HCT116 (cell line): ENCODE measurements at regions of chr18 and their contacts with region 1.

Region 1: DNA sequence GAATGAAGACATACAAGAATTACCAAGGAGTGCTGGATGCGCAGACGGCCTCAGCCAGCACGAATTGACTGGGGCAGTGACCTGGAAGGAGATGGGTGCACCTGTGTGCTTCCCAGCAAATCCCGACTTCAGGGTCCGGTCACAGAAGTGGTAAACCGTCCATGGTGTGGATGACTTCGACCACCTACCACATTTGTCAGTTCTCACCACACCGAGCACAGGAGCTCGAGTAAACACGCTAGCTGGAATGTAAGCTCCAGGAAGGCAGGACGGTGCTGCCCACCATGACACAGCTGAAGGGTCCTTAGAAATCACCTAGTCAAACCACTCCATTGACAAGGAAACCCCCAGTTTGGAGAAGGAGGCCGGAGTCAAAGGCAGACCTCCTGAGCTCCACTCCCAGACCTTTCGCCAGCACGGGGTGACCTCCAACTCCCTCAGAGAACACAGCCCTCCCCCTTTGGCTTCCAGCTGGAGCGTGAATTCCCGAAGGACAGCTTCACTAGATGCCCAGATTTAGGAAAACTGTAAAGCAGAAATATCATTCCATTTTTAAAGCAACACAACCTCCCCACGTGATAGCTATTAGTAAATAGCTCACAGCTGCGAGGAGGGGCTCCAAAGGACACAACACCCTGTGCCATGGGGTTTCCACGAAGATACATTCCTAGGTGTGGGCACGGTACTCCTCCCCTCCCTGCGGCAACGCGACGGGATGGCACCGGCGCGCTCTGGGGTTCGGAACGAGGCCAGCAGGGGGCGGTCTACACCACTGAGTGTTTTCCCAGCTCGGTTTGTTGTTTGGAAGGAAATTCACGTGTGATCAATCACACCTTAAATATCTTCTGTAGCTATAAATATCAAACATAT is 34.1 kb upstream of the GNAL start:
- DNase-seq: peak; percentile 27
- ATAC-seq: peak; percentile 99
- H3K4me3 ChIP-seq: no peak overlapping the region
- H3K27ac ChIP-seq: no peak overlapping the region
- H3K4me1 ChIP-seq: peaks cover 0 to 4% of the 10 kb centered on the region in 2 experiments; a peak in 2 of 4 replicates
- H3K27me3 ChIP-seq: 0 out of 2 replicates have a peak, but pooled peaks cover 6% of the 10 kb centered on the region
- CTCF ChIP-seq: peak; percentile 78 to 97 (median 89)
- POLR2A ChIP-seq: no peak
- RAD21 ChIP-seq: peak; percentile 88

Region 2: DNA sequence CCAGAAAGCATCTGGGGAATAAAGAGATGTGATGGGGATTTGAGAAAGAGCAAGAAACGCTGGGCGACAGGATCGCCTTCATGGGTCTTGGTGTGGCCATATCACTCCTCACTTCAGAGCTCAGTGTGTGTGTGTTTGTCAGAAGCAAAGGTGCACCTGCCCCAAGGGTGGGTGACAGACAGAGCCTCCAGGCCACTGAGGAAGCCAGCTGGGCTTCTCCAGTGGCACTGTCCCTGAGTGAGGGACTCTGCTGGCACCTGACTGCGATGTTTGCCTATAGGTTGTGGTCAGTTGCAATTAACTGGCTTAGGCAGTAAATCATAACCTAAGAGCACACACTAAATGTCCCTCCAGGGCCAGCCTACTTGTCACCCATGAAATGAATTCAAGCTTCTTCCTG is 10.6 kb after region 1 on chr18:
- CTCF ChIA-PET with region 1: interaction called, 18 read pairs
- POLR2A ChIA-PET with region 1: no interaction called
- RAD21 ChIA-PET with region 1: no interaction called
- intact Hi-C with region 1: no loop called
- DNase-seq: no peak
- ATAC-seq: no peak
- H3K4me3 ChIP-seq: no peak overlapping the region
- H3K27ac ChIP-seq: no peak overlapping the region
- H3K4me1 ChIP-seq: no peaks in the 10 kb centered on the region
- H3K27me3 ChIP-seq: peaks cover 61% of the 10 kb centered on the region
- CTCF ChIP-seq: no peak
- POLR2A ChIP-seq: no peak
- RAD21 ChIP-seq: no peak

Region 3: DNA sequence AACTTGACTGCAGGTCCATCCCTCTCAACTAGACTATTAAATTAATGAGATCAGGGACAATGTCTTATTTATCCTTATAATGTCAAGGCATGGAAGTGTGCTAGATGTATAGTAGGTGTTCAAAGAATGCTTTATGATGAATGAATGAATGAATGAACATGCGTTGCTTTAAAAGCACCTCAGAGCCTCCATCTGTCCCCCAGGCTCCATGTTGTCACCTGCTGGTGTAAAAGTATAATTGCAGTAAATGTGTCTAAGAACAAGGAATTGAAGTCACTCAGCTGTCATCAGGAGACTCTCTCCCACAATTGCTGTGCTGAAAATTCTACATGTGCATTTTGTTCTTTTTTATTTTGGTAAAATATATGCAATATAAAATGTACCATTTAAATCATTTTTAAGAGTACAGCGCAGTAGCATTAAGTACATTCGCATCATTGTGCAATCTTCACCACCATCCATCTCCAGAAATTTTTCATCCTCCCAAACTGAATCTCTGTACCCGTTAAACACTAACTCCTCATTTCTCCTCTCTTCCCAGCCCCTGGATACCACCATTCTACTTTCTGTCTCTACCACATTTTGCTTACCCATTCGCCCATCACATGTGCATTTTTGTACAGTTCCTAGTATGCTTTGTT is 86.7 kb after region 1 on chr18:
- CTCF ChIA-PET with region 1: interaction called, 20 read pairs
- POLR2A ChIA-PET with region 1: no interaction called
- RAD21 ChIA-PET with region 1: no interaction called
- intact Hi-C with region 1: no loop called
- DNase-seq: peak; percentile 23
- ATAC-seq: peak; percentile 69
- H3K4me3 ChIP-seq: no peak overlapping the region
- H3K27ac ChIP-seq: no peak overlapping the region
- H3K4me1 ChIP-seq: 0 out of 4 replicates have a peak, but pooled peaks cover 0 to 4% of the 10 kb centered on the region in 2 experiments
- H3K27me3 ChIP-seq: peaks cover 43% of the 10 kb centered on the region
- CTCF ChIP-seq: peak; percentile 31 to 70 (median 59); a peak in 5 of 6 replicates
- POLR2A ChIP-seq: no peak
- RAD21 ChIP-seq: peak; percentile 44; the same call in 1 of the 2 replicates

Region 4: DNA sequence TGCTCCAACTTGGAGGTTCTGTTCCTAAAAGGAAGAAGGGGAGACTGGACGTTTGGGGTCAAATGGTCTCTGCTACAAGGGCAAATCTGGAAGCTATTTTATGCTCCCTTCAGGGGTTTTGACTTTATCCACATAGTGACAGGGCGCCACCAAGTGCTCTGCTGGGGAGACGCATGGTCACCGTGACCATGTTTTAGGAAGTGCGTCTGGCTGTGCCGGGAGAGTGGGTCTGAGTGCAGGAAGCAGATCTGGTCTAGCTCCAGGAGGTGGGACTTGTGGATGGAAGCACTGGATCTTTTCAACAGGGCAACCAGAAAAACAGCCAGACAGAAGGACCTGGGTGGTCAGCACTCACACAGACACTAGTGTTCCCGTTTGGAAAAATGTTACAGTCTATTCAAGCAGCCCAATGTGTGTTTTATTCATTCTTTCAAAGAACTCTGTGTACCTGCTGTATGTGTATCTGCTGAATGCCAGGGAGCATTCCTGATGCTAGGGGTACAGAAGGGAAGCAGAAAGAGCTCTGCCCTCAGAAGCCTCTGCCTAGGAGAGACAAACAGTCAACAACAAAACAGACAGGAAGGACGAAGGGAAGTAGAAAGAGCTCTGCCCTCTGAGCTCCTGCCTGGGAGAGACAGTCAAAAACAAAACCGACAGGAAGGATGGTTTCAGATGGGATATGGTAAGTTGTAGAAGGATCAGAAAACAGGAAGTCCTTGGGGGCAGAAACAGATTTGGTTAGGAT is 340.6 kb after region 1 on chr18:
- CTCF ChIA-PET with region 1: interaction called, 13 read pairs
- POLR2A ChIA-PET with region 1: no interaction called
- RAD21 ChIA-PET with region 1: no interaction called
- intact Hi-C with region 1: loop called (anchors 1 kb)
- DNase-seq: peak; percentile 41
- ATAC-seq: peak; percentile 96
- H3K4me3 ChIP-seq: no peak overlapping the region
- H3K27ac ChIP-seq: no peak overlapping the region
- H3K4me1 ChIP-seq: peaks cover 6 to 19% of the 10 kb centered on the region in 2 experiments; a peak in 3 of 4 replicates
- H3K27me3 ChIP-seq: no peaks in the 10 kb centered on the region
- CTCF ChIP-seq: peak; percentile 73 to 89 (median 88)
- POLR2A ChIP-seq: no peak
- RAD21 ChIP-seq: peak; percentile 91

Region 5: DNA sequence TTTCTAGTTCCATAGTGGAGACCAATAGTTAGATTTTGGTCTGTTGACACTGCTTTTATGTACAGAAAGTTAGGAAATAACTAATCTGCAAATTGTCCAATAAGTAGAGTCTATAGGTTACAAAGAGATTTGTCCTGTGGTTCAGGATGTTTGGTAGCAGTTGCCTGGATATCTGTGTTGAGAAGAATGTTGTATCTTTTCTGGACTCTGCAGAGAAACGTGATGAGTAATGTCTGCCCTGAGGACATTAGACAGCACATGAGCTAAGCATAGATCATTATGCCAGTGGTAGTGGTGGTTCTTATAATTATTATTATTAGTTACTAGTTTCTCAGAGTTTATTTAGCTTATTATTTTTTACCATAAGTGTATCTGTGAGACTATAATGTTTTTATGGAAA is 504.5 kb after region 1 on chr18:
- CTCF ChIA-PET with region 1: no interaction called
- POLR2A ChIA-PET with region 1: no interaction called
- RAD21 ChIA-PET with region 1: no interaction called
- intact Hi-C with region 1: no loop called
- DNase-seq: no peak
- ATAC-seq: no peak
- H3K4me3 ChIP-seq: no peak overlapping the region
- H3K27ac ChIP-seq: no peak overlapping the region
- H3K4me1 ChIP-seq: no peaks in the 10 kb centered on the region
- H3K27me3 ChIP-seq: no peaks in the 10 kb centered on the region
- CTCF ChIP-seq: no peak
- POLR2A ChIP-seq: no peak
- RAD21 ChIP-seq: no peak

Region 6: DNA sequence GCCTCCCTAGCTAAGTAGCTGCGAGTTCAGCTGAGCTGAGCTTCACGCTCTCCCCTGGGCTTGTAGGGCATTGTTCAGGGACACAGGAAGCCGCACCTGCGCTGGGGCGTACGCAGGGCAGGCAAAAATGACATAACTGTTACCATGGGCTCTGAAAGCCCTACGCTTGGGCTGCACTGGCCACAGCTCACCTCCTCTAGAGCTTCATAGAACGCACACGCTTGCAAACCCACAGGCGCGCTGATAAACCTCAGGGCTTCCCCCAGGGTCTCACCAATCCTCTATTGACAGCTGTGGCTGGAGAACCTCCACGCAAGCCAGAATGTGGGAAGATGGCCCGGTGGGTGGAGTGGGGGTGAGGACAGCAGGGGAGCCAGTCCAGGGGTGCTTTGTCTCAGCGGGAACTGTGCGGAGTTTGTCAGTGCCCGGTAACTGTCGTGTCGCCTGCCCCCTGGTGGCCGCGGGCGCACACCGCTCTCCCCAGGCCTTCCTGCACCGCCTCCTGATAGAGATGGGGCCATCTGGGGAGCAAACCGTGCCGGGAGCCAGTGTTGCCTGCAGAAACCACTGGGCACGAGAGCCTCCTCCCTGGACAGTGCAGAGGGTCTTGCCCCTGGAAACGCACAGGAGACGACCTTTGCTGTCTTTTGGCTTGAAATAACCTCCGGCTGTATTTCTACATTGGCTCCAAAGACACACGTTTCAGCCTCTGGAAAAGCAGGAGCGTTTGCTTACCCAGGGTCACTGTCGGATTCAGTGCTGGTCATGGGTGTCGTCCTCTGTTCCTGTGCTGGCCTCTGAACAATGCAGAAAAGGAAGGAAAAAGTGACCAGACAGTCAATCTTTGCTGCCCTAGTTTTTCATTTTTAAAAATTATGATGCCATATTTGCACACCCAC is 582.2 kb after region 1 on chr18:
- CTCF ChIA-PET with region 1: interaction called, 11 read pairs
- POLR2A ChIA-PET with region 1: no interaction called
- RAD21 ChIA-PET with region 1: no interaction called
- intact Hi-C with region 1: loop called (anchors 5 kb)
- DNase-seq: peak; percentile 19
- ATAC-seq: peak; percentile 100
- H3K4me3 ChIP-seq: no peak overlapping the region
- H3K27ac ChIP-seq: no peak overlapping the region
- H3K4me1 ChIP-seq: peaks cover 0 to 9% of the 10 kb centered on the region in 2 experiments; a peak in 1 of 4 replicates
- H3K27me3 ChIP-seq: peaks cover 3% of the 10 kb centered on the region; the same call in 1 of the 2 replicates
- CTCF ChIP-seq: peak; percentile 65 to 94 (median 92)
- POLR2A ChIP-seq: no peak
- RAD21 ChIP-seq: peak; percentile 71